Endothelial cell of umbilical vein (primary cell): ENCODE measurements at regions of chr20 and their contacts with region 1.

Region 1: DNA sequence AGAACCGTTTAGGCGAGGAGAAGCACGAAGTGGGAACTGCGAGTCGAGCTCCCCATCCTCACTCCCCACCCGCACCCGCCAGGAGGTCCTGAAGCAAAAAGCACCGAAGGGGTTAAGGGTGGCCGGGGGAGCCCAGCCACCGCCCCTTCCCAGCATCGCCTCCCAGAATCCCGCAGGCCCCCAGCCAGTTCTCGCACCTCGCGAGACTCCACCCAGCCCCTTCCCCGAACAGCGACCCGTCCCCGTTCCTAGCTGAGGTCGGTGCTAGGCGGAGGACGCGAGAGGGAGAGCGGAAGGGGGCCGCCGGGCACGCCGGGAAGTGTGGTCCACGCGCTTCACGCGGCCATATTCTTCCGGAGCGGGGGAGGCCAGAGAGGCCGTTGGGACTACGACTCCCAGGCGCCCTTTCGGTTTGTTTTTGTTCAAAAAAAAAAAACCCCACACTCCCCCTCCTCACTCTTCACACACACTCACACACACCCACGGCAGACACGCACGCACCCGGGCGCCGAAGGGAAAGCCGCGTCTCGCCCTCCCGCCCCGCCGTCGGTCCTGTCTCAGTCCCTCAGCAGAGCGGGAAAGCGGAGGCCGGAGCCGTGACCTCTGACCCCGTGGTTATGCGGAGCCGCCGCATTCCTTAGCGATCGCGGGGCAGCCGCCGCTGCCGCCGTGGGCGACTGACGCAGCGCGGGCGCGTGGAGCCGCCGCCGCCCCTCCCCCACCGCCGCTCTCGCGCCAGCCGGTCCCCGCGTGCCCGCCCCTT is at the start of gene ASXL1:
- DNase-seq: peak; percentile 97
- H3K4me3 ChIP-seq: peak within 1 kb of the TSS; percentile 78 to 92 (median 92)
- H3K27ac ChIP-seq: peak within 1 kb of the TSS; percentile 94
- H3K4me1 ChIP-seq: peaks cover 30% of the 10 kb centered on the region
- H3K27me3 ChIP-seq: no peaks in the 10 kb centered on the region
- CTCF ChIP-seq: no peak
- POLR2A ChIP-seq: peak; percentile 61
- total RNA-seq, gene ASXL1: 98.9 and 101 TPM in 2 replicates

Region 2: DNA sequence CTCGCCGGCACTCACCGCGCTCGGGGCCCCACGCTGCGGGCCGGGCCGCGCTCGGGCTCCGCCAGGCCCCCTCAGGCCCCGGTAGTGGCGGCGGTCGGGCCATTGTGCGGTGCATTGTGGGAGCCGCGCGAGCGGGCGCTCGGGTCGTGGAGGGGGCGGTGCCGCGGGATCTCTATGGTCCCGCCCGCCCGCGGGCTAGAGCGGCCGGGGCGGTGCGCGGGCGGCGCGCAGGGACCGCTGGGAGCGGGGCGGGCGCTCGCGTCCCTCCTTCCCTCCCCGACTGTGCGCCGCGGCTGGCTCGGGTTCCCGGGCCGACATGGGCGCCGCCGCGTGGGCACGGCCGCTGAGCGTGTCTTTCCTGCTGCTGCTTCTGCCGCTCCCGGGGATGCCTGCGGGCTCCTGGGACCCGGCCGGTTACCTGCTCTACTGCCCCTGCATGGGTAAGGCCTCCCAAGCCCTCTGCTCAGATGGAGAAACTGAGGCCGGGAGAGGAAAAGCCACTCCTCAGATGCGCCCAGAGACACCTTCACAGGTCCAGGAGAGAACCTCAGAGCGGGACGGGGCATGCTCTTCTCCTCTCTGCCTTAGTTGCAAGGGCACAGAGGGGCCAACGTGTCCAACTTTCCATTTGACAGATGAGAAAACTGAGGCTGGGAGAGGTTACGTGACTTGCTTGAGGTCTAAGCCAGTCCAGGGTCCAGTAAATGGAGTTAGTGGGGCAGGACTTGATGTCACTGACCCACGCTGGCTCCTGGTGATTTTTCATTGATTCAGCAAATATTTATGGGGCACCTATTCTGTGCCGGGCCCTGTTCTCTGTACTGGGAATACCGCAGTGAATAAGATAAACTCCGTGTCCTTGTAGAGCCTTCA is 150.2 kb before region 1 on chr20 and contains the starts of genes PLAGL2 and POFUT1:
- CTCF ChIA-PET with region 1: no interaction called
- POLR2A ChIA-PET with region 1: interaction called, 3 read pairs
- dilution Hi-C with region 1: no loop called
- intact Hi-C with region 1: loop called (anchors 1 kb)
- DNase-seq: peak; percentile 79
- H3K4me3 ChIP-seq: peak within 1 kb of the TSS; percentile 38 to 81 (median 76)
- H3K27ac ChIP-seq: peak within 1 kb of the TSS; percentile 45
- H3K4me1 ChIP-seq: peaks cover 21% of the 10 kb centered on the region
- H3K27me3 ChIP-seq: no peaks in the 10 kb centered on the region
- CTCF ChIP-seq: peak; percentile 13 to 34
- POLR2A ChIP-seq: peak; percentile 95
- total RNA-seq, gene PLAGL2: 14.6 and 15.2 TPM in 2 replicates
- total RNA-seq, gene POFUT1: 48.1 and 51.4 TPM in 2 replicates

Region 3: GRCh38 chr20:32277361-32278198 is 80.5 kb before region 1 on chr20 and contains the start of gene KIF3B:
- CTCF ChIA-PET with region 1: no interaction called
- POLR2A ChIA-PET with region 1: no interaction called
- dilution Hi-C with region 1: no loop called
- intact Hi-C with region 1: no loop called
- DNase-seq: peak; percentile 75
- H3K4me3 ChIP-seq: peak within 1 kb of the TSS; percentile 63 to 99 (median 82)
- H3K27ac ChIP-seq: peak within 1 kb of the TSS; percentile 71
- H3K4me1 ChIP-seq: peaks cover 13% of the 10 kb centered on the region
- H3K27me3 ChIP-seq: peaks cover 3 to 7% of the 10 kb centered on the region in 2 experiments
- CTCF ChIP-seq: no peak
- POLR2A ChIP-seq: no peak
- total RNA-seq, gene KIF3B: 25.1 and 26.3 TPM in 2 replicates

Region 4: GRCh38 chr20:32325706-32326503 is 32.1 kb before region 1 on chr20:
- CTCF ChIA-PET with region 1: no interaction called
- POLR2A ChIA-PET with region 1: no interaction called
- dilution Hi-C with region 1: no loop called
- intact Hi-C with region 1: loop called (anchors 1 kb)
- DNase-seq: peak; percentile 94
- H3K4me3 ChIP-seq: no peak overlapping the region
- H3K27ac ChIP-seq: peak overlapping the region; percentile 91
- H3K4me1 ChIP-seq: peaks cover 17% of the 10 kb centered on the region
- H3K27me3 ChIP-seq: no peaks in the 10 kb centered on the region
- CTCF ChIP-seq: no peak
- POLR2A ChIP-seq: no peak

Region 5: DNA sequence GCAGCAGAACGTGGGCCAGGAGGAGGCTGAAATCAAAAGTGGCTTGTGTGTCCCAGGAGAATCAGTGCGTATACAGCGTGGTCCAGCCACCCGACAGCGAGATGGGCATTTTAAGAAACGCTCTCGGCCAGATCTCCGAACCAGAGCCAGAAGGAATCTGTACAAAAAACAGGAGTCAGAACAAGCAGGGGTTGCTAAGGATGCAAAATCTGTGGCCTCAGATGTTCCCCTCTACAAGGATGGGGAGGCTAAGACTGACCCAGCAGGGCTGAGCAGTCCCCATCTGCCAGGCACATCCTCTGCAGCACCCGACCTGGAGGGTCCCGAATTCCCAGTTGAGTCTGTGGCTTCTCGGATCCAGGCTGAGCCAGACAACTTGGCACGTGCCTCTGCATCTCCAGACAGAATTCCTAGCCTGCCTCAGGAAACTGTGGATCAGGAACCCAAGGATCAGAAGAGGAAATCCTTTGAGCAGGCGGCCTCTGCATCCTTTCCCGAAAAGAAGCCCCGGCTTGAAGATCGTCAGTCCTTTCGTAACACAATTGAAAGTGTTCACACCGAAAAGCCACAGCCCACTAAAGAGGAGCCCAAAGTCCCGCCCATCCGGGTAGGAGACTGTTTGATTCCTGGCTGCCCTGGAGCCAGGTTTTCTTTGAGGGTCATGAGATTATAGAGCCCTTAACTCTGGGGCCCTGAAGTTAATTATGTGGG is 75.4 kb after region 1 on chr20:
- CTCF ChIA-PET with region 1: no interaction called
- POLR2A ChIA-PET with region 1: no interaction called
- dilution Hi-C with region 1: no loop called
- intact Hi-C with region 1: loop called (anchors 1 kb)
- DNase-seq: peak; percentile 87
- H3K4me3 ChIP-seq: no peak overlapping the region
- H3K27ac ChIP-seq: peak overlapping the region; percentile 75
- H3K4me1 ChIP-seq: peaks cover 32% of the 10 kb centered on the region
- H3K27me3 ChIP-seq: no peaks in the 10 kb centered on the region
- CTCF ChIP-seq: no peak
- POLR2A ChIP-seq: peak; percentile 17